HAP-1 (cell line): ENCODE measurements at regions of chr12 and their contacts with region 1.

Region 1: GRCh38 chr12:110826592-110827200 is 20.1 kb upstream of the CCDC63 start:
- DNase-seq: peak; percentile 86 to 96
- H3K4me3 ChIP-seq: no peak overlapping the region
- H3K4me1 ChIP-seq: peaks cover 3% of the 10 kb centered on the region; the same call in 1 of the 2 replicates
- H3K27me3 ChIP-seq: no peaks in the 10 kb centered on the region

Region 2: GRCh38 chr12:110468212-110469048 is 358.3 kb before region 1 on chr12 and contains the starts of genes FAM216A and GPN3:
- in situ Hi-C with region 1: loop called (anchors 10 kb)
- DNase-seq: peak; percentile 97 to 99
- H3K4me3 ChIP-seq: peak within 1 kb of the TSS; percentile 60
- H3K4me1 ChIP-seq: peaks cover 17% of the 10 kb centered on the region
- H3K27me3 ChIP-seq: no peaks in the 10 kb centered on the region

Region 3: DNA sequence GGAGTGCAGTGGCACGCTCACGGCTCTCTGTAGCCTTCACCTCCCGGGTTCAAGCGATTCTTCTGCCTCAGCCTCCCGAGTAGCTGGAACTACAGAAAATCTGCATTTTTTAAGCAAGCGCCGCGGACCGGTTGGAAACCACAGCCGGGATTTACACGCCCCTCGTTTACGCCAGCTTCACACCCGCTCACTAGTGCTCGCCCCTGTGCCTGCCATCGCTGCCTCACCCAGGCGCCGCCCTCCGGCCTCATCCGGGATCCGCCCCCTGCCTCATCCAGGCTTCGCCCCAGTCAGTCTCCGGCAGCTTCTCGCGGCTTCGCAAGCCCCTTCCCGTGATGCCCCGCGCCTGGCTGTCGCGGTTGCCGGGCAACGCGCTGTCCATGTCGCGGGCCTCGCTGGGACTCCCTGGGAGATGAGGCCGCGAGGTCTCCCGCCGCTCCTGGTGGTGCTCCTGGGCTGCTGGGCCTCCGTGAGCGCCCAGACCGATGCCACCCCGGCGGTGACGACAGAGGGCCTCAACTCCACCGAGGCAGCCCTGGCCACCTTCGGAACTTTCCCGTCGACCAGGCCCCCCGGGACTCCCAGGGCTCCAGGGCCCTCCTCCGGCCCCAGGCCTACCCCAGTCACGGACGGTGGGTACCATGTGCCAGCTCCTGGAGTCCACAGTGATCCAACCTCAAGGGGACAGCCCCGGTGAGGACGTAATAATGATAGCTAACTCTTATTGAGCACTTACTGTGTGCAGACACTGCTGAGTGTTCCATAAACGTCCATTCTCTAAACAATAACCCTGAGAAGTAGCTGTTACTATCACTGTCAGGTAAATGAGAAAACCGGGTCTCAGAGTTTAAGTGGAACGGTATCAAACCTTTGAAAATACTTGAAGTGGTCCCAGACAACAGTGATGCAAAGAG is 212.7 kb before region 1 on chr12 and contains the start of gene TCTN1:
- in situ Hi-C with region 1: loop called (anchors 10 kb)
- DNase-seq: peak; percentile 95 to 99
- H3K4me3 ChIP-seq: peak within 1 kb of the TSS; percentile 50
- H3K4me1 ChIP-seq: peaks cover 7% of the 10 kb centered on the region
- H3K27me3 ChIP-seq: no peaks in the 10 kb centered on the region

Region 4: GRCh38 chr12:110742718-110743570 is 83.8 kb before region 1 on chr12 and contains the start of gene PPP1CC:
- in situ Hi-C with region 1: loop called (anchors 5 kb)
- DNase-seq: peak; percentile 88 to 96
- H3K4me3 ChIP-seq: peak within 1 kb of the TSS; percentile 78
- H3K4me1 ChIP-seq: peaks cover 38% of the 10 kb centered on the region
- H3K27me3 ChIP-seq: no peaks in the 10 kb centered on the region

Region 5: GRCh38 chr12:111170543-111170942 is 343.8 kb after region 1 on chr12:
- in situ Hi-C with region 1: no loop called
- DNase-seq: no peak
- H3K4me3 ChIP-seq: no peak overlapping the region
- H3K4me1 ChIP-seq: peaks cover 9% of the 10 kb centered on the region
- H3K27me3 ChIP-seq: no peaks in the 10 kb centered on the region; the same call in 1 of the 2 replicates